ENCODE measurements at regions of chr1 and their contacts with region 1.

Region 1: GRCh38 chr1:70517444-70517843 is 106.4 kb downstream of the CTH start:
- DNase-seq: no peak
- H3K4me3 ChIP-seq: no peak overlapping the region
- H3K27ac ChIP-seq: no peak overlapping the region
- H3K4me1 ChIP-seq: peaks cover 4% of the 10 kb centered on the region
- H3K27me3 ChIP-seq: no peaks in the 10 kb centered on the region
- CTCF ChIP-seq: no peak

Region 2: GRCh38 chr1:70277875-70278274 is 239.6 kb before region 1 on chr1:
- CTCF ChIA-PET with region 1: no interaction called
- POLR2A ChIA-PET with region 1: interaction called, 12 read pairs
- intact Hi-C with region 1: no loop called
- DNase-seq: no peak
- H3K4me3 ChIP-seq: no peak overlapping the region
- H3K27ac ChIP-seq: no peak overlapping the region
- H3K4me1 ChIP-seq: no peaks in the 10 kb centered on the region
- H3K27me3 ChIP-seq: no peaks in the 10 kb centered on the region
- CTCF ChIP-seq: no peak

Measured in A673 (cell line).